ENCODE measurements at regions of chr17 and their contacts with region 1.

Region 1: DNA sequence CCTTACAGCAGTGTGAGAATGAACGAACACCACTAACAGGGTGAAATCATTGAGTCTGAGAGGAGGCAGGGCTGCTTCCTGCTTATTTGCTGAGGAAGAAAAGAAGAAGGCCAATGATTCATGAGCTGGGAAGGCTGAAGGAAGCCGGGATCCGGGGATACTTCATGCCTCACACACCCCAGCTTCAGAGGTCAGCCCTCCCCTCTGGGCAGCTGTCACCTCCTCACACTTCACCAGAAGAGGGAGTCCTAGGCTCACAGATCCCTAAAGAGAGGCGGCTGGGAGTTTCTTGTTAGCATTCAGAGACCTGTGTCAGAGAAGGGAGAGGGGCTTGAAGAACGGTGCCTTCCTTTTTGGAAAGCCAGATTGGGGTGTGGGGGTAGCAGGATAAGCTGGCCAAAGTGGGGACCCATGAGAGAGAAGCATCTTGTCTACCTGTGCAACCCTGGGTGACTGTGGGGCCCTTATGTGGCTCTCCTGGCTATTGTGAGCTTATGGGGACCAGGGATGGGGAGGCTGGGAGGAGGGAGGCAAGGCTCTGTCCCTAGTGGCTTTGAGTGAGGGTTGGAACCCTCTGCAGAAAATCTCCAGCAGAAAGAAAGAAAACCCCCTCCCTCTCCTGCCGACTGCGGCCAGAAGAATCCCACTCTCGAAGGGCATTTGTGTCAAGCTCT is 94.6 kb downstream of the RGS9 start:
- DNase-seq: no peak
- H3K4me3 ChIP-seq: no peak overlapping the region
- H3K27ac ChIP-seq: no peak overlapping the region
- H3K4me1 ChIP-seq: peaks cover 13 to 26% (median 18%) of the 10 kb centered on the region in 6 donors
- H3K27me3 ChIP-seq: peaks cover 0 to 43% (median 0%) of the 10 kb centered on the region in 7 donors
- CTCF ChIP-seq: peak in 9 of 11 experiments; percentile 23 to 74 (median 52)
- POLR2A ChIP-seq: no peak

Region 2: DNA sequence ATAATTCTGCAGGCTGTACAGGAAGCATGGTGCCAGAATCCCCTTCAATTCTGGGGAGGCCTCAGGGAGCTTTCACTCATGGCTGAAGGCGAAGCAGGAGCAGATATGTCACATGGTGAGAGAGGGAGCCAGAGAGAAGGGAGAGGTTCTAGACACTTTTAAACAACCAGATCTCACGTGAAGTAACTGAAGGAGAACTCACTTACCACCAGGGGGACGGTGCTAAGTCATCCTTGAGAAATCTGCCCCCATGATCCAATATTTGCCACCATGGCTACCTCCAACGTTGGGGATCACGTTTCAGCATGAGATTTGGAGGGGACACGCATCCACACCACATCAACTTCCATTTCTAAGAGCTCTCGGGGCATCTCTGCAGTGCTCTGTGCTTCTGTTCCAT is 137.9 kb before region 1 on chr17:
- intact Hi-C with region 1: no loop called
- DNase-seq: no peak
- H3K4me3 ChIP-seq: no peak overlapping the region
- H3K27ac ChIP-seq: no peak overlapping the region
- H3K4me1 ChIP-seq: no peaks in the 10 kb centered on the region
- H3K27me3 ChIP-seq: no peaks in the 10 kb centered on the region
- CTCF ChIP-seq: no peak
- POLR2A ChIP-seq: no peak

Region 3: DNA sequence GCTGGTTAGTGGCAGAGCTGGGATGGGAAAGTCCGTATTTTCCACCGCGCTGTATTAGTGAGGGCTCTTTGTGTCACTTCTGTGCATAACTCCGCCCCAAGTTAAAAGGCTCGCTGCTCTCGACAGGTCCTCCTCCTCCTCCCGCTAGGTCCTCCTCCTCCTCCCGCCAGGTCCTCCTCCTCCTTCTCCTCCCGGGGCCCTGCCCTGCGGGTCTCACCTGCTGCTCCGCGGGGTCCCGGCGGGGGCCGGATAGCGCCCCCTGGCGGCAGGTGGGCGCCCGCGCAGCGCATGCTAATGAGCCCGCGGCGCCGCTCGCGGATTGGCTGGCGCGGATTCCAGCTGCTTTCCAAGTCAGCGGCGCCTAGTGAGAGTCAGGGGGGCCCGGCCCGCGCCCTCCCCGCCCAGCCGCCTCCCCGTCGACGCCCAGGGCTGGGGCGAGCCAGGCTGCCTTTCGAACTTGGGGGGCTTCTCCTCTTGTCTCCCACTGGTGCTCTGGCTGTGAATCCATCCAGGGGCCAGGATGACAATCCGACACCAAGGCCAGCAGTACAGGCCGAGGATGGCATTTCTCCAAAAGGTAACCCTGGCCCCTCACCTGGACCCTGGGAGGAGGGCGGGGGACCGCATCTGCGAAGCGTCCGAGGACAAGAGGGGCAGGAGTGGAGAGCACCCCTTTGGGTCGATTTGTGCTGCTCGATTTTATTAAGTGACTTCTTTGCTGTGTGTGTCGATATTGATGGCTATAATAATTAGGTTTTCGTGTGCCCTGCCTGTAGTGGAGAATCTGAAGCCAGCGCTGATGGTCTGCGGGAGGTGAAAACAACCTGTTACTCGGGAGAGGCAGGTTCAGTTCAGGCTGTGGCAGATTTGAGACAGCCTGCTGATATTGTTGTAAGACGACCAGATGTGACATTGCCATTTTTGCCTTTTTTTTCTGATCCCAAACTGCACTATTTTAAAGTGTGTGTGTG is 94.5 kb before region 1 on chr17 and contains the start of gene RGS9:
- intact Hi-C with region 1: no loop called
- DNase-seq: peak; percentile 95
- H3K4me3 ChIP-seq: peak within 1 kb of the TSS; percentile 1 to 69 (median 36)
- H3K27ac ChIP-seq: peak within 1 kb of the TSS in 3 of 8 donors; percentile 10 to 38 (median 13)
- H3K4me1 ChIP-seq: peaks cover 0 to 20% (median 12%) of the 10 kb centered on the region in 6 donors
- H3K27me3 ChIP-seq: peaks cover 0 to 32% (median 5%) of the 10 kb centered on the region in 7 donors
- CTCF ChIP-seq: peak; percentile 90 to 100 (median 98)
- POLR2A ChIP-seq: no peak
- total RNA-seq, gene RGS9: 5.5 to 9.2 (median 7.5) TPM

Region 4: DNA sequence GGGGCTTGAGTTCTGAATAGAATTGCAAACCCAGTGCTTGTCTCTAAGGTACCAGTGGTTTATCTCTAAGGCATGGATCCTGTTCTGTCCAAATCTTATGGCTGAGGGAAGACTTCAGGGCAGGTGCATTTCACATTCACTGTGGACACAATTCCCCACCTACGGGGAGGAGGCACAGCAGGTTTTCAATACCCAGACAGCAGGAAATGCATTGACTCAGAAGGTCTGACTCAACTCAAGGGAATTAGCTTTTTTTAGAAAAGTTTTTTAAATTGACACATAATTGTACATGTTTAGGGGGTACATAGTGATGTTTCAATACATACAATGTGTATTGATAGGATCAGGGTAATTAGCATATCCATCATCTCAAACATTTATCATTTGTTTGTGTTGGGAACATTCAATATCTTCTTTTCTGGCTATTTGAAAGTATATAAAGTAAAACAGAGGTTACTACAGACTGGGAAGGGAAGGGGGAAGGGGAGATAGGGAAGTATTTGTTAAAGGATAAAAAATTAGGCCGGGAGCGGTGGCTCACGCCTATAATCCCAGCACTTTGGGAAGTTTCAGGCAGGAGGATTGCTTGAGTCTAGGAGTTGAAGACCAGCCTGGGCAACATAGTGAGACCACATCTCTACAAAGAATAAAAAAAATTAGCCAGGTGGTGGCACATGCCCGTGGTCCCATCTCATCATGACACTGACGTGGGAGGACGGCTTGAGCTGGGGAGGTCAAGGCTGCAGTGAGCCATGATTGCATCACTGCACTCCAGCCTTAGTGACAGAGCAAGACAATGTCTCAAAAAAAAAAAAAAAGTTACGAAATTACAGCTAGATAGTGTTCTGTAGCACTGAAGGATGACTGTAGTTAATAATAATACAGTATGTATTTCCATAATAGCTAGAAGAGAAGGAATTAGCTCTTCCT is 39.7 kb before region 1 on chr17:
- intact Hi-C with region 1: no loop called
- DNase-seq: no peak
- H3K4me3 ChIP-seq: no peak overlapping the region
- H3K27ac ChIP-seq: no peak overlapping the region
- H3K4me1 ChIP-seq: no peaks in the 10 kb centered on the region
- H3K27me3 ChIP-seq: no peaks in the 10 kb centered on the region
- CTCF ChIP-seq: no peak
- POLR2A ChIP-seq: no peak

Region 5: DNA sequence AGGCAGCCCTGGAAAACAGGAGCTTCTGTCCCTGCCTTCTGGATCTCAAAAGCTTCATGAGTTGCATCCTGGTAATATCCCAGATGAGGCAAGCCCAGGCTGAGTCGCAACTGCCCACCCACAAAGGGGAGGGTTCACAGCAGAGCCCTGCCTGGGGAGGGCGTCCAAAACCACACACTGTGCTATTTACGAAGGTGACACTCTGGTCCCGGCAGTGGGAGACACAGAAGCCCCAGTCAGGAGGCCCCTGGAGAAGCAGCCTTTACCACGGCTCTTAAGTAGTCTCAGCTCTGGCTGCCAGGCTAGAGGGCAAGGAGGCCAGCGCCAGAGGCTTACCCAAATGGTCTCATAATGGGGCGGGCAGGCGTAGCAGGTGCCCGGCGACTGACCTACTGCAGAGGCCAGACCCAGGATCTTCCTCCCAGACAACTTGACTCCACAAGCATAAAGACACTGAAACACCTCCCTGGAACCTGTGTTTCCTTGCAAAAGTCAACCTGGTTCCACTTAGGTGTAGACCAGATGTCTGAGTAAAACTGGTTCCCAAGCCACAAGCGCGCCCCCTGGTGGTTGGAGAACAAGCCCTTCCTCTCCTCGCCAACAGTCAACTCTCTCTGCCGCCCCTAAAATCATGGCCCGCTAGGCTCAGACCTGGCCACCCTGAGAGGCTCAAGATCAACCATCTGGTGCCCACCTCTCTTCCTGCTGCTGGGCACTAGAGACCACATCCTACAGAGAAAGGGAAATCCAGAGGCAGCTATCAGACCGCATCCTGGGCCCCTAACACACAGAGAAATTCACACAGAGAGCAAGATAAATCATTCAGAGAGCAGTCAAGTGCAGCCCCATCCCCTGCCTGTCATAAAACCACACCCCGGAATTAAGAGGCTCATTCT is 324.5 kb after region 1 on chr17:
- intact Hi-C with region 1: loop called (anchors 10 kb)
- DNase-seq: peak; percentile 92
- H3K4me3 ChIP-seq: peak overlapping the region in 2 of 8 donors; percentile 10 to 73
- H3K27ac ChIP-seq: peak overlapping the region in 5 of 8 donors; percentile 20 to 87 (median 63)
- H3K4me1 ChIP-seq: peaks cover 0 to 40% (median 6%) of the 10 kb centered on the region in 6 donors
- H3K27me3 ChIP-seq: peaks cover 0 to 53% (median 16%) of the 10 kb centered on the region in 7 donors
- CTCF ChIP-seq: peak; percentile 38 to 84 (median 69)
- POLR2A ChIP-seq: no peak

Region 6: GRCh38 chr17:66165513-66166123 is 933.8 kb after region 1 on chr17:
- intact Hi-C with region 1: loop called (anchors 5 kb)
- DNase-seq: no peak
- H3K4me3 ChIP-seq: no peak overlapping the region
- H3K27ac ChIP-seq: no peak overlapping the region
- H3K4me1 ChIP-seq: peaks cover 0 to 3% (median 0%) of the 10 kb centered on the region in 6 donors
- H3K27me3 ChIP-seq: no peaks in the 10 kb centered on the region
- CTCF ChIP-seq: peak; percentile 45 to 80 (median 71)
- POLR2A ChIP-seq: no peak